ENCODE measurements at regions of chr4 and their contacts with region 1.

Region 1: DNA sequence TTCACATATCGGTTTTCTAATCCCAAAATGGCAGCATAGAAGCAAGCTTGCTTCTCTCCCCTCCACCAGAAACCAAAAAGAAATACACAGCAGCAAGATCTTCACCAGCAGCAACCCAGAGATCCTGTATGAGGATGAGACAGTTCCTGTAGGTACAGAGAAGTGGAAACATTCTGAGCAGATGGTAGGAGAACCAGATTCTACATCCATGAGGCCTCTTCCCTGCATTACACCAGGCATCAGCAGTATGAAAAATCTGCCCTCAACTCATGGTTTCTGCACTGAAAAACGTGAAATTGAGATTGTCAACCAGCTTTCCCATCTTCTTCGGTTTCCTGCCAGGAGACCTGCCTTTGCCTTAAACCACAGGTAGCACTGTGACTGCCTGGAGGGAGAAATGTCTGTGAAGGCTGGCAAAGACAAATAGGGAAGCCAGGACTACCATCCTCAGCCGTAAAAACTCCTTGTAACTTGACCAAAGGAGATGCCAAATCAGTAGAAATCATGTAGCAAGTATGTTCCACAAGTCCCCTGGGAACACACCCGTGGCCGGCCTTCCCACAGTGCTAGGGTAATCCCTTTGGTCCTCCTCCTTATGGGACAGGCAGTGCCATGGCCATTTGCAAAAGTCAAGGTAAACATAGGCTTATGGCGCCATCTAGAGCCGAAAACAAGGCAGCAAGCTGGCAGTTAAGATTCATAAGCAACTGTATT is 24.0 kb upstream of the MTHFD2L start:
- DNase-seq: peak; percentile 76
- ATAC-seq: peak; percentile 63
- H3K4me3 Mint-ChIP-seq: no peak overlapping the region
- H3K27ac Mint-ChIP-seq: no peak overlapping the region
- H3K4me1 Mint-ChIP-seq: no peaks in the 10 kb centered on the region
- H3K27me3 Mint-ChIP-seq: peaks cover 2% of the 10 kb centered on the region

Region 2: GRCh38 chr4:73308286-73308685 is 825.7 kb before region 1 on chr4:
- CTCF ChIA-PET with region 1: interaction called, 4 read pairs
- POLR2A ChIA-PET with region 1: no interaction called
- intact Hi-C with region 1: loop called in 1 of 2 experiments (anchors 10 kb)
- DNase-seq: no peak
- ATAC-seq: no peak
- H3K4me3 Mint-ChIP-seq: no peak overlapping the region
- H3K27ac Mint-ChIP-seq: no peak overlapping the region
- H3K4me1 Mint-ChIP-seq: no peaks in the 10 kb centered on the region
- H3K27me3 Mint-ChIP-seq: no peaks in the 10 kb centered on the region

Region 3: DNA sequence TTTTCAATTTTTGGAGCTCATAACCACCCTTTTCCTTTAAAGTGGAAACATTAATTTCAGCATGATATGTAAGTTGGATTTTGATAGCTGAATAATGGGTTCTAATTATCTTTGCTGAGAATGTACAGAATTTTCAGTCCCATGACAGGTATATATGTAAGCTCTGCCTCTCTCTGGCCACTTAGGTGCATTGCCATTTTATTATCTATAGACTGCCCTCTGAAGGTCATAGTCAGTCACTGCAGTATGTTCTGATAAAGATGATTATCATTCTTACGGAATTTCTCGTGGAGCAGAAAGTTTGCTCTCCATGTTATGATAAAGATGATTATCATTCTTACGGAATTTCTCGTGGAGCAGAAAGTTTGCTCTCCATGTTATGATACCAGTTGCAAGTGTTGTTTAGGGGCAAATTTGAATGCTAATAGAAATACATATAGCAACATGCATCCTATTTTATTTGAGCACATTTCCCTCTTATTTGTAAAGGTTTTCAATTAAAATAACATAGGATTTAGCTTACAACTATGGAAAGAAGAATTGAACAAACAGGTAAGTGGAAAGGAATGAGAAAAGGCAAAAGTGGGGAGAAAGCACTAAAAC is 687.5 kb before region 1 on chr4:
- CTCF ChIA-PET with region 1: no interaction called
- POLR2A ChIA-PET with region 1: no interaction called
- intact Hi-C with region 1: loop called in 1 of 2 experiments (anchors 10 kb)
- DNase-seq: no peak
- ATAC-seq: peak; percentile 83
- H3K4me3 Mint-ChIP-seq: no peak overlapping the region
- H3K27ac Mint-ChIP-seq: no peak overlapping the region
- H3K4me1 Mint-ChIP-seq: no peaks in the 10 kb centered on the region
- H3K27me3 Mint-ChIP-seq: peaks cover 14% of the 10 kb centered on the region

Region 4: DNA sequence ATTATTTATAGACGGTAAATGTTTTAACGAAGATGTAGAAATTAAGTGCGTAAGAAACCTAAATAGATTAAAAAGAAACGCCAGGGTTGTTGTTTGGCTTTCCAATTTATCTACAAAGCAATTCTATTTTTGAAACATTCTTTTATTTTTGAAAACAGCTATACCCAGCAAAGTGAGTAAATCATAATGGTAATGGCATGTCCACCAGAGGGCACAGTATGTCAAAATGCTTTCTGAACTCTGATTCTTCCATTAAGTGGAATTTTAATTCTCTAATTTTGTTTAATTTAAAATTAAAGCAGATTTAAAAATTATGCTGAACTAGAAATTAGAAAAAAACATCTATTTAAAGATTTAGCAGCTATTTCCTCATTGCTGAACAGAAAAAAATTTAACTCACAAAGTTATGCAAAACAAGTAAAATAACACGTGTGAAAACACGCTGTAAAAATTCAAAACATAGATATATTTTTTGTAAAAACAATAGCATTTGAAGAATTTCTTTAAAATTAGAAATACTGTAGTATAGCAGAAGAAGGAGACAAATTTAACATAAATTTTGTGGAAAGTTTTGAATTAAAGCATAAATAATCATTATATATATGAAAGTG is 540.2 kb before region 1 on chr4:
- CTCF ChIA-PET with region 1: no interaction called
- POLR2A ChIA-PET with region 1: no interaction called
- intact Hi-C with region 1: loop called in 1 of 2 experiments (anchors 5 kb)
- DNase-seq: peak; percentile 8
- ATAC-seq: no peak
- H3K4me3 Mint-ChIP-seq: no peak overlapping the region
- H3K27ac Mint-ChIP-seq: no peak overlapping the region
- H3K4me1 Mint-ChIP-seq: no peaks in the 10 kb centered on the region
- H3K27me3 Mint-ChIP-seq: no peaks in the 10 kb centered on the region

Region 5: DNA sequence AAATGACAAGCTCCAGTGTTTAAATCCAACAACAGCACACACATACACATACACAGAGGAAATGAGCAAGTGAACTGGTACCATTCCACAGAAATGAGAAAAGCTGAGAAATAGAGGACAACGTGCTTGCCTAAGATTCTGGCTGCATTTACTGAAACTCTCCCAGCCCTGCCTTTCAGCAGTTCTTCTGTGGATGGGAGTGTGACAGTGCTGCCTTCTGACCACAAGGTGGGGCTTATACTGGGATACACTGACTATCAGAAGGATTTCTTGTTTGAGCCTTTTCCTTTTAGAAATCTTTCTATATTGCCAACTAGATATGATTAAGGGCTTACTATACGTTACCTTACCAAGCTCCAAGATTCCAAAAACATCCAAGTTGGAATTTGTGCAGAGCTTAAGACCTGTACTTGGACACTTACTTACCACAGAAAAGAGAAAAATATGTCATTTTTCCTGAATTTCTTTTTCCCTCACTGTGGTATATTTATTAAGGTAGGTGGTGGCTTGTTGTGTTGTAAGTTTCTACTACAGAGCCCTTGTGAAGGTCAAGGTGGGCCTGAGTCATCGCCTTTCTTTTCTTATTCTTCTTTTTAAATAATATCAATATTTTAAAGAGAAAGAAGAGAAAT is 404.3 kb before region 1 on chr4:
- CTCF ChIA-PET with region 1: interaction called, 8 read pairs
- POLR2A ChIA-PET with region 1: no interaction called
- intact Hi-C with region 1: loop called (anchors 2 to 5 kb)
- DNase-seq: peak; percentile 22
- ATAC-seq: peak; percentile 47
- H3K4me3 Mint-ChIP-seq: no peak overlapping the region
- H3K27ac Mint-ChIP-seq: no peak overlapping the region
- H3K4me1 Mint-ChIP-seq: no peaks in the 10 kb centered on the region
- H3K27me3 Mint-ChIP-seq: peaks cover 7% of the 10 kb centered on the region

Region 6: DNA sequence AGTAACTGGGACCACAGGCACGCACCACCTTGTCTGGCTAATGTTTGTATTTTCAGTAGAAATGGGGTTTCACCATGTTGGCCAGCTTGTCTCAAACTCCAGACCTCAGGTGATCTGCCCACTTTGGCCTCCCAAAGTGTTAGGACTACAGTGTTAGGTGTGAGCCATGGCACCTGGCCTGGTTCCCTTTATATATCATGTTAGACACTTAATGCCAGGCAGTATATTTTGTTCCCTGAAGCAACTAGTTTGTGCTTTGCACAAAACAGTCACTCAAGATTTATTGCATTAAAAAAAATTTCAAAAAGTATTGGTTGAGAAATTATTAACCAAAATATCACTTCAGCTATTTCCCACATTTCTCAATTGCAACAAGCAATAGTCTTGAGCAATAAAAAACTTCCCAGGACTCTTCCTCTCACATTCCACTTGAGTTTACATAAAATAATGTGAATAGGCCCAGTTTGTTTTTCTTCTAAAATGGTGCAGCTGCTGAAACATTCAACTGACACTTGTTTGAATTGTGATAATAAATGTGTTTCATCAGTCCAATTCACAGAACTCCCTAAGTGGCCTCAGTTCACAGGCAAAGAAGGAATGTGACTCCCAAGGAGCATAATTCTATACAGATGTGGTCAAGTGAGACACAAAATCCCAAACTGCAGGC is 242.1 kb before region 1 on chr4:
- CTCF ChIA-PET with region 1: no interaction called
- POLR2A ChIA-PET with region 1: no interaction called
- intact Hi-C with region 1: no loop called
- DNase-seq: no peak
- ATAC-seq: no peak
- H3K4me3 Mint-ChIP-seq: no peak overlapping the region
- H3K27ac Mint-ChIP-seq: no peak overlapping the region
- H3K4me1 Mint-ChIP-seq: no peaks in the 10 kb centered on the region
- H3K27me3 Mint-ChIP-seq: no peaks in the 10 kb centered on the region

Measured in activated CD4-positive, alpha-beta T cell treated with anti-CD3 and anti-CD28 coated beads for 36 hours (primary cell).